ENCODE measurements at regions of chr17 and their contacts with region 1.

Region 1: DNA sequence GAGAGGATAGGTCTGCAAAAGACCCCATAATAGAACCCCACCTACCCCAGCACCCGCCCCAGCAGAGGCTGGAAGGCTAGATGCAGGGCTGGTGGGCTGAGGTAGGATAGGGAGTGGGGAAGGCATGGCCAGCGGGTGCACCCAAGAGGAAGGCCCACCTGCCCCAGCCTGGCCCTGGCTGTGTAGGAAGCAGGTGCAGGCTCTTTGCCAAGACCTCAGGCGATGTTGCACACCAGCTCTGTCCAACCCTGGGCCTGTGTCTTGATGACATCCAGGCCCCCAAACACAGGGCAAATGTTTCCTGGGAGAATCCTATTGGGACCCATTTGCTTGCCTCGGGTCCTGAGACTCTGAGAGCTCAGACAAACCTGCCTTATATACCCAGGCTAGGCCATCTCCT is 12.2 kb downstream of the UNC119 start:
- DNase-seq: no peak
- ATAC-seq: no peak
- H3K4me3 Mint-ChIP-seq: no peak overlapping the region
- H3K27ac Mint-ChIP-seq: no peak overlapping the region
- H3K4me1 Mint-ChIP-seq: peaks cover 22% of the 10 kb centered on the region
- H3K27me3 Mint-ChIP-seq: no peaks in the 10 kb centered on the region
- CTCF ChIP-seq: no peak

Region 2: GRCh38 chr17:28494445-28495188 is 45.6 kb before region 1 on chr17:
- CTCF ChIA-PET with region 1: interaction called, 12 read pairs
- POLR2A ChIA-PET with region 1: no interaction called
- intact Hi-C with region 1: loop called (anchors 1 kb)
- DNase-seq: peak; percentile 82
- ATAC-seq: peak; percentile 95
- H3K4me3 Mint-ChIP-seq: no peak overlapping the region
- H3K27ac Mint-ChIP-seq: no peak overlapping the region
- H3K4me1 Mint-ChIP-seq: peaks cover 11% of the 10 kb centered on the region
- H3K27me3 Mint-ChIP-seq: peaks cover 2% of the 10 kb centered on the region
- CTCF ChIP-seq: peak; percentile 63

Measured in activated B cell treated with CpG ODN at 0.5 μM for 24 hours (primary cell).